ENCODE measurements at regions of chr2 and their contacts with region 1.

Region 1: DNA sequence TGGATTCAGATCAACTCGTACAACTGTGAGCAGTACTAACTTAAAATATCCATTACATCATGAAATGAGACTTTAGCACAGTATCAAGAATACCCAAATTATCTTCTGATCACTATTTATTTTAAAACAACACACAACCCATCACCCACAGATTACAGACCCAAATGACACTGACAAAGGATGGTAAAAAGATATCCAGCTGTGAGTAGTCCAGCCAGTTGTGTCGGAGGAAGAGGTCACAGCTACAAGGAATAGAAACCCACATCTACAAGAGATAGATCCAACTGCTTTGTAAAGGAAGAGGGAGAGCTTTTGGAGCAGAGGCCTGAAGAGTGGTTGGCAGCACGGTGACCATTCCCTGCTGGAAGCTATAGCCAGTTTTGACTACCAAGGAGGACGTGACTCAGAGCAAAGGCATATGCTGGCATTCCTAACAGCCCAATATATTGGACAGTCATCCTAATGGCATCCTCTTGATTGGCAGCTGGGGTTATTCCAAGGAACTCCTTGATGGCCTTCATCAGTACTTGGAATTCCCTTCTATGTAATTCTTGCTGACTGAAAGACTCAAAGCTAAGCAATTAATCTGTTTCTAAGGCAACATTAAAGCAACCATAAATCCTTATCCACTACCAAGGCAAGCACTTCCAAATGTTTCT is 17.1 kb downstream of the SLC8A1 start:
- DNase-seq: peak; percentile 85 to 100
- H3K4me3 ChIP-seq: peak overlapping the region; percentile 22; the same call in 1 of the 2 replicates
- H3K27ac ChIP-seq: peak overlapping the region; percentile 81
- H3K4me1 ChIP-seq: peaks cover 51% of the 10 kb centered on the region
- H3K27me3 ChIP-seq: no peaks in the 10 kb centered on the region
- CTCF ChIP-seq: no peak

Region 2: GRCh38 chr2:40332191-40332826 is 102.5 kb before region 1 on chr2:
- CTCF ChIA-PET with region 1: no interaction called
- POLR2A ChIA-PET with region 1: no interaction called
- intact Hi-C with region 1: loop called (anchors 5 kb)
- DNase-seq: peak in 1 of 2 experiments; percentile 78
- H3K4me3 ChIP-seq: no peak overlapping the region
- H3K27ac ChIP-seq: no peak overlapping the region
- H3K4me1 ChIP-seq: peaks cover 12% of the 10 kb centered on the region
- H3K27me3 ChIP-seq: no peaks in the 10 kb centered on the region
- CTCF ChIP-seq: no peak

Region 3: DNA sequence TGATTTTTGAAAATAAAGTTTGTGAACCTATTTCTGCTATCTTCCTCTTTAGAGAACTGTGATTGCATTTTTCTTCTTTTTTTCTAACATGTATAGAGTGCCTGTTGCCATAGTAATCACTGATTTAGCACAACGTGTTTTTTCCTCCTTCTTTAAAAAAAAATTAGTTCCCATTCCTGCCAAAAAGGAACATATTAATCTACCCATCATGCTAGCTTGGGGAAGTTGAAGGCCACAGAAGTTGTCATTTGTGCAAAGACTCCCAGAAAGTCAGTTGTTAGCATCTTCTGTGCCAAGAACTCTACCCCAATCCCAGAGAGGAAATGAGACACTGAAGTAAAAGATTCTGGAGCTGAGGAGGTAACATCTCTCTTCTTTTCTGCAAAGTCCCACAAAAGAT is 40.2 kb before region 1 on chr2:
- CTCF ChIA-PET with region 1: no interaction called
- POLR2A ChIA-PET with region 1: interaction called, 6 read pairs
- intact Hi-C with region 1: loop called (anchors 1 kb)
- DNase-seq: no peak
- H3K4me3 ChIP-seq: peak overlapping the region; percentile 35; the same call in 1 of the 2 replicates
- H3K27ac ChIP-seq: peak overlapping the region; percentile 77
- H3K4me1 ChIP-seq: peaks cover 29% of the 10 kb centered on the region
- H3K27me3 ChIP-seq: no peaks in the 10 kb centered on the region
- CTCF ChIP-seq: no peak

Region 4: DNA sequence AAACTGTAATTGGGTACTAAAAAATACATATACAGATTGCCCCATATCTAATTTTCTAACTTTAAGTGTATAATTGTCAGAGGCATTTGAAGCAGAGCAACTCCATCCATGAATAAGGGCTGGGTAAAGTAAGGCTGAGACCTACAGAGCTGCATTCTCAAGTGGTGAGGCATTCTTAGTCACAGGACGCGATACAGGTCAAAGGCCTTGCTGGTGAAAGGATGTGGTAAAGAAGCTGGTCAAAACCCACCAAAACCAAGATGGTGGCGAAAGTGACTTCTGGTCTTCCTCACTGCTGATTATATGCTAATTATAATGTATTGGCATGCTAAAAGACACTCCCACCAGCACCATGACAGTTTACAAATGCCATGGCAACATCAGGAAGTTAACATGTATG is 32.9 kb before region 1 on chr2:
- CTCF ChIA-PET with region 1: interaction called, 3 read pairs
- POLR2A ChIA-PET with region 1: interaction called, 8 read pairs
- intact Hi-C with region 1: loop called (anchors 1 kb)
- DNase-seq: peak; percentile 73 to 91
- H3K4me3 ChIP-seq: peak overlapping the region; percentile 18; the same call in 1 of the 2 replicates
- H3K27ac ChIP-seq: peak overlapping the region; percentile 68
- H3K4me1 ChIP-seq: peaks cover 37% of the 10 kb centered on the region
- H3K27me3 ChIP-seq: no peaks in the 10 kb centered on the region
- CTCF ChIP-seq: no peak

Region 5: GRCh38 chr2:40412456-40412855 is 22.3 kb before region 1 on chr2:
- CTCF ChIA-PET with region 1: no interaction called
- POLR2A ChIA-PET with region 1: no interaction called
- intact Hi-C with region 1: loop called (anchors 2 kb)
- DNase-seq: peak in 1 of 2 experiments; percentile 86
- H3K4me3 ChIP-seq: no peak overlapping the region
- H3K27ac ChIP-seq: no peak overlapping the region
- H3K4me1 ChIP-seq: peaks cover 22% of the 10 kb centered on the region
- H3K27me3 ChIP-seq: no peaks in the 10 kb centered on the region
- CTCF ChIP-seq: no peak

Region 6: DNA sequence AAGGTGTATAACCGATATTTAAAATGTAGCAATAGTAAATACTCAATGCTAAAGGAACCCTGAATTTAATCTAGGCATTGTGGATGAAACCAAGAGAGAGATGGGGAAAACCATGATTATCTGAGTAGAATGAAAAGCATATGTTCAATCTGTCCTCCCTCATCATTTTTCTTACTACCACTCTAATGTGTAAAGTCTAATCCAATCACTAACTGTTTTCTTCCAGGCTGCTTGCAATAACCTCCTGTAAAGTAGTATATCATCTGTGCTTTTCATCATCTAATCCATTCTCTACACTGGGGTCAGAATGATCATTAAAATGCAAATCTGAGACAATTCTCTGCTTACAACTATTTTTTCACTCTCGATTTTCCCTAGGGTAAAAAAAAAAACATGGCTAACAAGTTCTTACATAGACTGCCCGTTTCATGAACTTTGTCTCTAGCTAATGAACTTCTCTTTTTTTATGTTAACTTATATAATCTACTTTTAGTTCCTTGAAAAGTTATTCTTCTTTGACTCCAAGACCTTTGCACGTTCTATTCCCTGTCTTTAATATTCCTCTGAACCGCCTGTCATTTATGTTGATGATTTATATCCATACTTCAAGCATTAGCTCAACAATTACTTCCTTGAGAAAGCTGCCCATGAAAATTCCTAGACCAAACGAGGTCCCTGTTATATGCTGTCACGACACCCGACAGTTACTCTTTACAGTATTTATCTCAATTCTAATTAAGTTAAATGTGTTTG is 111.8 kb after region 1 on chr2:
- CTCF ChIA-PET with region 1: interaction called, 11 read pairs
- POLR2A ChIA-PET with region 1: no interaction called
- intact Hi-C with region 1: no loop called
- DNase-seq: no peak
- H3K4me3 ChIP-seq: no peak overlapping the region
- H3K27ac ChIP-seq: no peak overlapping the region
- H3K4me1 ChIP-seq: no peaks in the 10 kb centered on the region
- H3K27me3 ChIP-seq: no peaks in the 10 kb centered on the region
- CTCF ChIP-seq: no peak

Measured in PC-9 (cell line).